ENCODE measurements at regions of chr3 and their contacts with region 1.

Region 1: DNA sequence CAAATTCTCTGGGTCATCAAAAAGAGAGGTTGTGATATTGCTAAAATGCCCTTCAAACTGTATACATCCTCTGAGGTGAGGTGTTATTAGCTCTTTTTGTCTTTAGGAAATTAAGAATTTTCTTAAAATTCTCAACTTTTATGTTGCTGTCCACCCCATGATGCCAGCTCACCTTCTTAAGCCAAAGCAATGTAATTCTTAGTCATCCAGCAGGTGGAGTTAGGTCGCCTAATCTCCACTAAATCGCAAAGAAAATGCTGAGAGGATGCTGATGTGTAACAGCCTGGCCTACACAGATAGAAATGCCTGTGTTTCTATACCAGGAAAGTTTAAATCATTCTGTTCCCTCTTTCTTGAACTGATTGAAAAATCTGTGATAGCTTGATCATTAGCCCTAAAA is 770.2 kb upstream of the ALCAM start:
- DNase-seq: peak; percentile 68
- H3K4me3 ChIP-seq: no peak overlapping the region
- H3K27ac ChIP-seq: no peak overlapping the region
- H3K4me1 ChIP-seq: no peaks in the 10 kb centered on the region
- H3K27me3 ChIP-seq: no peaks in the 10 kb centered on the region
- CTCF ChIP-seq: peak; percentile 42 to 49
- POLR2A ChIP-seq: no peak

Region 2: GRCh38 chr3:104273046-104273649 is 323.4 kb before region 1 on chr3:
- CTCF ChIA-PET with region 1: interaction called, 10 read pairs
- POLR2A ChIA-PET with region 1: no interaction called
- dilution Hi-C with region 1: no loop called
- intact Hi-C with region 1: no loop called
- DNase-seq: peak; percentile 34
- H3K4me3 ChIP-seq: no peak overlapping the region
- H3K27ac ChIP-seq: no peak overlapping the region
- H3K4me1 ChIP-seq: no peaks in the 10 kb centered on the region
- H3K27me3 ChIP-seq: peaks cover 0 to 2% of the 10 kb centered on the region in 2 experiments
- CTCF ChIP-seq: peak; percentile 47 to 57
- POLR2A ChIP-seq: no peak

Region 3: GRCh38 chr3:105375750-105376511 is 779.4 kb after region 1 on chr3:
- CTCF ChIA-PET with region 1: interaction called, 12 read pairs
- POLR2A ChIA-PET with region 1: no interaction called
- dilution Hi-C with region 1: no loop called
- intact Hi-C with region 1: no loop called
- DNase-seq: no peak
- H3K4me3 ChIP-seq: no peak overlapping the region
- H3K27ac ChIP-seq: no peak overlapping the region
- H3K4me1 ChIP-seq: no peaks in the 10 kb centered on the region
- H3K27me3 ChIP-seq: no peaks in the 10 kb centered on the region
- CTCF ChIP-seq: no peak
- POLR2A ChIP-seq: no peak